WTC11 (cell line): ENCODE measurements at regions of chr3 and their contacts with region 1.

Region 1: GRCh38 chr3:25594007-25594502 is 70.7 kb downstream of the TOP2B start:
- DNase-seq: no peak
- ATAC-seq: peak; percentile 79
- H3K4me3 Mint-ChIP-seq: no peak overlapping the region
- H3K27ac Mint-ChIP-seq: no peak overlapping the region
- H3K4me1 Mint-ChIP-seq: peaks cover 19% of the 10 kb centered on the region
- H3K27me3 Mint-ChIP-seq: no peaks in the 10 kb centered on the region
- CTCF ChIP-seq: peak; percentile 68

Region 2: GRCh38 chr3:25582242-25582641 is 11.8 kb before region 1 on chr3:
- CTCF ChIA-PET with region 1: interaction called, 10 read pairs
- POLR2A ChIA-PET with region 1: no interaction called
- DNase-seq: no peak
- ATAC-seq: no peak
- H3K4me3 Mint-ChIP-seq: no peak overlapping the region
- H3K27ac Mint-ChIP-seq: no peak overlapping the region
- H3K4me1 Mint-ChIP-seq: no peaks in the 10 kb centered on the region
- H3K27me3 Mint-ChIP-seq: no peaks in the 10 kb centered on the region
- CTCF ChIP-seq: no peak

Region 3: GRCh38 chr3:25665315-25666280 is 71.5 kb after region 1 on chr3:
- CTCF ChIA-PET with region 1: no interaction called
- POLR2A ChIA-PET with region 1: no interaction called
- DNase-seq: no peak
- ATAC-seq: no peak
- H3K4me3 Mint-ChIP-seq: peak overlapping the region; percentile 95
- H3K27ac Mint-ChIP-seq: peak overlapping the region; percentile 97
- H3K4me1 Mint-ChIP-seq: peaks cover 32% of the 10 kb centered on the region
- H3K27me3 Mint-ChIP-seq: no peaks in the 10 kb centered on the region
- CTCF ChIP-seq: no peak